CD8-positive, alpha-beta memory T cell (primary cell): ENCODE measurements at regions of chr4 and their contacts with region 1.

Region 1: DNA sequence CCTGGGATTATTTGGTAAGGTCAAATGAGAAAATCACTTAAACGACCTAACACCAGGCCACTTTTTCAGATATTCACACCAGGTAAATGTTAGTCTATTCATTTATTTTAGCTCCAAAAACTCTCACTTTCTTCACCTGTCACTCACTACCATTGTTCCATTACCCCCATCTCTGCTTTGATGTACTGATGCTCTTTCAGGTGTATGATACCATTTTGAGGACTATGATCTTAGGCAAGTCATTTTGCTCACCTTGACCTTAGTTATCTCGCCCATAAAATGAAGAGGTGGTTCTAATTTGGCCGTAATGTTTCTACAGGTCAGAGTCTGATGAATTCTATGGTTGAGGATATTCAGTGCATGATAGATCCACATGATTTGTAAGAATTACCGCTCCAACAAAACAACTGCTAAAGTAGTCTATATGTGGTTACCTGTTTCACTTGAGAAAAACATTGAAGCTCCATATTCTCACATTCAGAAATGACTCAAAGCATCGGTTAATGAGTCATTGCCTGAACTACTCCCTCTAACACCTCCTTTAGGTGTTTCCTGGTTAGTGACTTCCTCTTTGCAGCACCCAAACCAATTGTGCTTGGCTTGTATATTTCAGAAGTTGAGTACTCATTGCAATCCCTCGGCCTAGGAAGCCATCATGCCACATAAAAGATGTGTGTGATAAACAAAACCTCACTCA is 4.5 kb downstream of the DTHD1 start:
- DNase-seq: peak; percentile 33 to 84 (median 44)
- H3K4me3 ChIP-seq: peak overlapping the region; percentile 21
- H3K4me3 Mint-ChIP-seq: peak overlapping the region; percentile 76 to 94 (median 86)
- H3K27ac ChIP-seq: peak overlapping the region; percentile 66
- H3K27ac Mint-ChIP-seq: peak overlapping the region; percentile 80 to 97 (median 94)
- H3K4me1 ChIP-seq: peaks cover 19% of the 10 kb centered on the region
- H3K4me1 Mint-ChIP-seq: peaks cover 66 to 94% (median 87%) of the 10 kb centered on the region in 3 donors
- H3K27me3 ChIP-seq: no peaks in the 10 kb centered on the region
- H3K27me3 Mint-ChIP-seq: no peaks in the 10 kb centered on the region

Region 2: DNA sequence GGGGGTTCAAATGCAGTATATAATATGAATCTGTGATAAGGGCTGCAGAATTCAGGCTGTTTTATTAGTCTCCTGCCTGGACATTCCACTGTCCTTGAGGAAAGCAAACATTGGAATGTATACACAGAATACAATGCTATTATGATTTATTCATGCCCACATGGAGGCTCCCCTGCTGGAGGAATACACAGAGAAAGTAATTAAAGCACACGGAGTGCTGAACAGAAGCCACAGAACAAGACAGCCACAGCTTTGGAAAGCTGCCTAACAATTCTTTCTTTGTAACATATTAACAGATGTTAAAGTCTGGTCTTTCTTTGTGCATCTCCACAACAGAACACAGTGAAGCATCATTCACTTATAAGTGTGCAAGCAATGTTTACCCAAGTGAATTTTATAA is 197.4 kb before region 1 on chr4:
- CTCF ChIA-PET with region 1: no interaction called
- POLR2A ChIA-PET with region 1: no interaction called
- DNase-seq: no peak
- H3K4me3 ChIP-seq: no peak overlapping the region
- H3K4me3 Mint-ChIP-seq: no peak overlapping the region
- H3K27ac ChIP-seq: no peak overlapping the region
- H3K27ac Mint-ChIP-seq: peak overlapping the region in 1 of 8 donors; percentile 11
- H3K4me1 ChIP-seq: no peaks in the 10 kb centered on the region
- H3K4me1 Mint-ChIP-seq: peaks cover 13 to 41% (median 27%) of the 10 kb centered on the region in 3 donors
- H3K27me3 ChIP-seq: no peaks in the 10 kb centered on the region
- H3K27me3 Mint-ChIP-seq: no peaks in the 10 kb centered on the region

Region 3: GRCh38 chr4:36255577-36255976 is 30.4 kb before region 1 on chr4:
- CTCF ChIA-PET with region 1: interaction called, 5 read pairs
- POLR2A ChIA-PET with region 1: interaction called, 12 read pairs
- DNase-seq: peak; percentile 46 to 90 (median 82)
- H3K4me3 ChIP-seq: no peak overlapping the region
- H3K4me3 Mint-ChIP-seq: peak overlapping the region; percentile 38 to 85 (median 79)
- H3K27ac ChIP-seq: no peak overlapping the region
- H3K27ac Mint-ChIP-seq: peak overlapping the region; percentile 61 to 97 (median 92)
- H3K4me1 ChIP-seq: peaks cover 40% of the 10 kb centered on the region
- H3K4me1 Mint-ChIP-seq: peaks cover 57 to 64% (median 64%) of the 10 kb centered on the region in 3 donors
- H3K27me3 ChIP-seq: no peaks in the 10 kb centered on the region
- H3K27me3 Mint-ChIP-seq: no peaks in the 10 kb centered on the region

Region 4: GRCh38 chr4:36267486-36268284 is 18.2 kb before region 1 on chr4:
- CTCF ChIA-PET with region 1: interaction called, 11 read pairs
- POLR2A ChIA-PET with region 1: interaction called, 7 read pairs
- DNase-seq: no peak
- H3K4me3 ChIP-seq: no peak overlapping the region
- H3K4me3 Mint-ChIP-seq: peak overlapping the region in 5 of 7 donors; percentile 10 to 55 (median 26)
- H3K27ac ChIP-seq: no peak overlapping the region
- H3K27ac Mint-ChIP-seq: peak overlapping the region; percentile 85 to 99 (median 94)
- H3K4me1 ChIP-seq: peaks cover 25% of the 10 kb centered on the region
- H3K4me1 Mint-ChIP-seq: peaks cover 45 to 55% (median 49%) of the 10 kb centered on the region in 3 donors
- H3K27me3 ChIP-seq: no peaks in the 10 kb centered on the region
- H3K27me3 Mint-ChIP-seq: no peaks in the 10 kb centered on the region

Region 5: GRCh38 chr4:36301127-36301526 is 15.2 kb after region 1 on chr4:
- CTCF ChIA-PET with region 1: no interaction called
- POLR2A ChIA-PET with region 1: no interaction called
- DNase-seq: no peak
- H3K4me3 ChIP-seq: no peak overlapping the region
- H3K4me3 Mint-ChIP-seq: no peak overlapping the region
- H3K27ac ChIP-seq: no peak overlapping the region
- H3K27ac Mint-ChIP-seq: peak overlapping the region in 1 of 8 donors; percentile 52
- H3K4me1 ChIP-seq: no peaks in the 10 kb centered on the region
- H3K4me1 Mint-ChIP-seq: peaks cover 12 to 42% (median 25%) of the 10 kb centered on the region in 3 donors
- H3K27me3 ChIP-seq: no peaks in the 10 kb centered on the region
- H3K27me3 Mint-ChIP-seq: no peaks in the 10 kb centered on the region